HEK293T (cell line): ENCODE measurements at regions of chr2 and their contacts with region 1.

Region 1: DNA sequence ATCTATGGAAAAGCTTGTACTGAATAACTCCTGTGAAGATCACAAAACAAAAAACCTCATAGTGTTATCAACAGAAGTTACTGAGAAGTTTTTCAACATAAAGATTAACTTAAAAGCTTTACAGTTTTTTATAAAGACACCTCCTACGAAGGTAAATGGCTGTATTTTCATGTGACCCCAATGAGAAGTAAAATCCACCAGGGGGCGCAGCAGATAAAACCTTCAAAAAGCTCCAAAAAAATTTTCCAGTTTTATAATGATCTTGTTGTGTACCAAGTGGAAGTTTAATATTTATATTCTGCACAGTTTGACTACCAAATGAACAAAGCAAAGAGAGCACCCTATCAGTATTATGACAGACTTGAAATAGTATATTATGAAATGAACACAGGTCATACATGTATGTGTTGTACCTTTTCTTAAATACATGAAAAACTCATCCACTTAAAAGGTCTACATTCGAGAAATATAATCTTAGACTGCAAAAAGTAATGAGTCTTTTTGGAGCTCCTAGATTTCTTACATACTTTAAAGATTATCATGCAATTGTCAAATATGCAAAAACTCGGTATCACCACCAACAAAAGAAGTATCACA is 38.5 kb downstream of the PNO1 start:
- DNase-seq: peak; percentile 21

Region 2: DNA sequence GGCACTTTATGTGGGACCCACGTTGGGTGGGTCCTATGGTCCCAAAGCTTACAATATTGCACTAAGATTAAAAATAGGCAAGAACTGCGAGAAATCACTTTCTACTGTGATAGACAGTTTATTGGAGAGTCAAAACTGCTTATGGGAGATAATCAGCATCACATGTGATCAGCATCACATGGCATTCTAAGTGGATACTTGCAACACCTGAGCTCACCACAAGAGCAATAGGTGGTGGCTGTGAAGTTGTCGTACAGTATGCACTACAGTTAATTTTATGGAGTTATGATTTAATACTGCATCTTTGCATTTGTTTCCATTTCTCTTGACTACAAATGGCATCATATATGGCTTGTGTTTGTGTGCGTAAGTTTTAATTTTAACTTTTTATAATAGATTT is 26.9 kb before region 1 on chr2:
- CTCF ChIA-PET with region 1: no interaction called
- POLR2A ChIA-PET with region 1: no interaction called
- DNase-seq: no peak

Region 3: GRCh38 chr2:68206793-68207192 is 10.6 kb after region 1 on chr2:
- CTCF ChIA-PET with region 1: interaction called, 11 read pairs
- POLR2A ChIA-PET with region 1: no interaction called
- DNase-seq: no peak

Region 4: GRCh38 chr2:68244456-68244855 is 48.2 kb after region 1 on chr2:
- CTCF ChIA-PET with region 1: interaction called, 14 read pairs
- POLR2A ChIA-PET with region 1: no interaction called
- DNase-seq: no peak

Region 5: GRCh38 chr2:68319398-68320117 is 123.3 kb after region 1 on chr2 and contains the start of gene CNRIP1:
- CTCF ChIA-PET with region 1: no interaction called
- POLR2A ChIA-PET with region 1: no interaction called
- DNase-seq: peak; percentile 65